ENCODE measurements at regions of chr17 and their contacts with region 1.

Region 1: GRCh38 chr17:82105882-82106687 is 8.0 kb upstream of the FASN start:
- DNase-seq: peak; percentile 35 to 50
- ATAC-seq: peak in 7 of 8 donors; percentile 7 to 53 (median 39)
- H3K4me3 ChIP-seq: peak overlapping the region in 8 of 10 donors; percentile 0 to 45 (median 22)
- H3K27ac ChIP-seq: peak overlapping the region in 9 of 10 donors; percentile 3 to 91 (median 51)
- H3K4me1 ChIP-seq: peaks cover 8 to 40% (median 32%) of the 10 kb centered on the region in 9 donors
- H3K27me3 ChIP-seq: no peaks in the 10 kb centered on the region
- CTCF ChIP-seq: peak in 4 of 9 donors; percentile 17 to 28 (median 18)

Region 2: GRCh38 chr17:81991684-81992305 is 114.3 kb before region 1 on chr17:
- intact Hi-C with region 1: no loop called
- DNase-seq: peak; percentile 73 to 76
- ATAC-seq: peak; percentile 84 to 95 (median 90)
- H3K4me3 ChIP-seq: peak overlapping the region in 6 of 10 donors; percentile 6 to 38 (median 24)
- H3K27ac ChIP-seq: peak overlapping the region; percentile 55 to 89 (median 76)
- H3K4me1 ChIP-seq: peaks cover 4 to 25% (median 18%) of the 10 kb centered on the region in 9 donors
- H3K27me3 ChIP-seq: no peaks in the 10 kb centered on the region
- CTCF ChIP-seq: peak in 3 of 9 donors; percentile 6 to 33 (median 22)

Region 3: DNA sequence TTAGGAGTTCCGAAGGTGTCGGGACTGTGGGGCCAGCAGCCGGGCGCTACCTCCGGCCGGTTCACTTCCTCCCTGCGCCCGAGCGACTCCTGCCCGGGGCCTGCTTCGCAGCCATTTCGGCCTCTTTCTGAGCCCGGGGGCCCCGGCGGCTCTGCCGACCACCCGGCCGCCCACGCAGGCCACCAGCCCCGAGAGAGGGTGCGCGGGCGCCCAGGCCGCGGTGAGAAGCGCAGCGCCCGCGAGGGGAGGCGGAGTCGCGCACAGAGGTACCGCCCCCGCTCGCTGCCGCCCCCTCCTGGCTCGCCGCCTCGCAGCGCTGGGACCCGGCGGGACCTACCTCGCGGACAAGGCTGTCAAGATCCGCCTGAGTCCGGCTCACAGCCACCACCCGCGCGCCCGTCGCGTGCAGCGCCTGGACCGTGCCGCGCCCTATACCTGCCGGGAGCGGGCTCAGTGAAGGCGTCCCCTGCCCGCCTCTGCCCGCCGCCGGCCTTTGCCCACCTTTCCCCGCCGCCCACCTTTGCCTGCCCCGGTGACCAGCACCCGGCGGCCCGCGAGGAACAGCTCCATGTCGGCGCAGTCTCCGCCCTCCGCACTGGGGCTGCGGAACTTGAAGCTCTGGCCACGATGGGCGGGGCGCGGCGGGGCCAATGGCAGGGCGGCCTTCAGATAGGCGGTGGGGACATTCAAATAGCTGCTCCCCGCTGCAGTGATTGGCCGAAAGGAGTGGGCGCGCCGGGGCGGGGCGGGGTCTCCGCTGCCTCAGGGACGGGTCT is 68.8 kb before region 1 on chr17 and contains the start of gene DCXR:
- intact Hi-C with region 1: loop called in 2 of 10 experiments (anchors 5 to 10 kb)
- DNase-seq: peak; percentile 97 to 98
- ATAC-seq: peak; percentile 95 to 99 (median 98)
- H3K4me3 ChIP-seq: peak within 1 kb of the TSS; percentile 58 to 82 (median 72)
- H3K27ac ChIP-seq: peak within 1 kb of the TSS; percentile 90 to 97 (median 94)
- H3K4me1 ChIP-seq: peaks cover 4 to 24% (median 18%) of the 10 kb centered on the region in 9 donors
- H3K27me3 ChIP-seq: peaks cover 0 to 5% (median 2%) of the 10 kb centered on the region in 7 donors
- CTCF ChIP-seq: peak; percentile 68 to 94 (median 86)
- total RNA-seq, gene DCXR: 155 to 258 (median 187) TPM

Region 4: GRCh38 chr17:82065638-82066303 is 40.3 kb before region 1 on chr17 and contains the start of gene DUS1L:
- intact Hi-C with region 1: no loop called
- DNase-seq: peak; percentile 48 to 77
- ATAC-seq: peak; percentile 74 to 87 (median 84)
- H3K4me3 ChIP-seq: peak within 1 kb of the TSS; percentile 61 to 100 (median 94)
- H3K27ac ChIP-seq: peak within 1 kb of the TSS; percentile 71 to 97 (median 88)
- H3K4me1 ChIP-seq: peaks cover 17 to 31% (median 23%) of the 10 kb centered on the region in 9 donors
- H3K27me3 ChIP-seq: no peaks in the 10 kb centered on the region
- CTCF ChIP-seq: no peak
- total RNA-seq, gene DUS1L: 34.1 to 96.4 (median 43.1) TPM

Region 5: DNA sequence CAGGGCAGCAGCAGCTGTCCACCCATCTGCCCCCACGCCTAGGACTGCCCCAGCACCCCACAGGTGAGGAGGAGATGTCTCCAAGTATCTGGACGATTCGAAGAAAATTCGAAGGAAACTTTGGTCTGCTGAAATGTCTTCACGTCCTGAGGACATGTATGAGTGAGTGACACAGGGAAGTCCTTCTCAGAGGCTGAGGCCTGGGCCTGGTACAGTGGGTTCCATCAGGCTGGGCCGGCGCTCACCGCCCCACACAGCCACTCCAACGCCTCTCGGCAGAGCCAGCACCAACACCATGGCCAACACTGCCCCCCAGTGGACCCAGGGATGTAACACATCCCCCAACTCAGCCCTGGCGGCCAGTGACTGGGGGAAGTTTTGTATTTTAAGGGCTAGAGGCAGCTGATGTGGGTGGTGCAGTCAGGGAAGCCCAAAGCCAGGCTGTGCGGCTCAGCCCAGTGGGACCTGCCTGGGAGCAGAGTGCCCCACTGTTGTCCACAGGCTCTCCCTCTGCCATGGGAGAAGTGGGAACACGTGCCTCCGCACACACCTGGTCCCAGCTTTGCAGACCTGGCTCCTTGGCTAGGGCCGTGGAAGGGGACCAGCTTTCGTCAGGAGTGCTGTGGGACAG is 47.8 kb after region 1 on chr17:
- intact Hi-C with region 1: no loop called
- DNase-seq: peak; percentile 70 to 79
- ATAC-seq: peak; percentile 83 to 94 (median 91)
- H3K4me3 ChIP-seq: no peak overlapping the region
- H3K27ac ChIP-seq: no peak overlapping the region
- H3K4me1 ChIP-seq: no peaks in the 10 kb centered on the region
- H3K27me3 ChIP-seq: no peaks in the 10 kb centered on the region
- CTCF ChIP-seq: peak; percentile 81 to 96 (median 88)

Region 6: DNA sequence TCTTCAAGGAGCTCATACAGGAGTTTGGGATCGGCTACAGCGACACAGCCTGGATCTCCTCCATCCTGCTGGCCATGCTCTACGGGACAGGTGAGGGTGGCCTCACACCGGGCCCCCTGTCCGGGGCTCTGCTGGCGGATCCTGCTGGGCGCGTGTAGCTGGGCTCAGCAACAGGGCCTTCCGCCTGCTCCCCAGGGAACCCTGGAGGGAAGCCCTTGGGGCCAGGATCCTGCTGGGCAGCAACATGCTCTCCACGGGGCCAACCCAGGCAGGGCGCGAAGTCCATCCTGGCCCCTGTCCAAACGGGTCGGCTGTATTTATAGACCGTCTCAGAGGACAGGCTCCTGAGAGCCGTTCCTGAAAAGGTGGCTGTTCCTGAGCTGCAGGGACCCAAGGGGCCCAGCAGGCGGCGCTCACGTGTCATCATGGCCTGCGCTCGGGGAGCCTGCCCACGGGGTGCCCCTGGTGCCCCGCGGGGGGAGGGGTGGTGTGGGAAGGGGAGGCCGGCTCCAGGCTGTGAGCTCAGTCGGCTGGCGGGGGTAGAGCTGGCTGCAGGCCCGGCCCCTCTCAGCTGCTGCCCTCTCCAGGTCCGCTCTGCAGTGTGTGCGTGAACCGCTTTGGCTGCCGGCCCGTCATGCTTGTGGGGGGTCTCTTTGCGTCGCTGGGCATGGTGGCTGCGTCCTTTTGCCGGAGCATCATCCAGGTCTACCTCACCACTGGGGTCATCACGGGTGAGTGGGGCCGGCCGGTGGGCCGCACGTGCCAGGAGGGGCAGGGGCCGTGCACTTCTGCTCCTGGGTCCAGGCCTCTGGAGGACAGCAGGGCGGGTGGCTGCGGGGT is 130.3 kb after region 1 on chr17:
- intact Hi-C with region 1: no loop called
- DNase-seq: peak in 1 of 2 donors; percentile 67
- ATAC-seq: peak in 5 of 8 donors; percentile 0 to 10 (median 4)
- H3K4me3 ChIP-seq: no peak overlapping the region
- H3K27ac ChIP-seq: peak overlapping the region in 2 of 10 donors; percentile 45 to 51
- H3K4me1 ChIP-seq: peaks cover 53 to 98% (median 63%) of the 10 kb centered on the region in 9 donors
- H3K27me3 ChIP-seq: no peaks in the 10 kb centered on the region
- CTCF ChIP-seq: peak; percentile 76 to 92 (median 87)

Measured in heart right ventricle (tissue), 16 donors.